Vagina (tissue), 2 donors: ENCODE measurements at regions of chr7 and their contacts with region 1.

Region 1: GRCh38 chr7:130781346-130781745 is 47.3 kb upstream of the KLF14 start:
- DNase-seq: no peak
- H3K4me3 ChIP-seq: no peak overlapping the region
- H3K27ac ChIP-seq: no peak overlapping the region
- H3K4me1 ChIP-seq: no peaks in the 10 kb centered on the region
- H3K27me3 ChIP-seq: no peaks in the 10 kb centered on the region
- CTCF ChIP-seq: no peak
- POLR2A ChIP-seq: no peak

Region 2: DNA sequence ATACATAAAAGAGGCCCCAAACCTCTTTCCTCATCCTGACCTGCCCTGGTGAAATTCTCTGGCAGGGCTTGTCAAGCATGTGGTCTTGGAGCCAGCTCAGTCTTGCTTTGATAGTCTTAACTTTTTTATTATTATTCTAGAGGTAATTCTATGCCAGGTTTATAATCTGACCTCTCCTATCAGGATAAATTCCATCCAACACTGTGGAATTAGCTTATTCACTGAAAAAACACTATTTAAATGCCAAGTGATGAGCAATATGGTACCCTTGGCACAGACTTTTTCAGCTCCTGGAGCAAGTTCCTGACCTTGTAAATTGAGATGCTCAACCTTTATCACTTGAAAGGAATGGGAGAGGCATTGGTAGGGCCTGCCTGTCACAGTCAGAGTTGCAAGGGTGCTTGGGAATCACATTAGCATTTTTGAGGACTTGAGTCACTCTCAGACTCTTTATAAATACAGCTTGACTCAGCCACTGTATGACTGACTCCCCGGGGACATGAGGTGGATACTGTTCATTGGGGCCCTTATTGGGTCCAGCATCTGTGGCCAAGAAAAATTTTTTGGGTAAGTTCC is 488.6 kb before region 1 on chr7 and contains the start of gene CPA4:
- intact Hi-C with region 1: no loop called
- DNase-seq: no peak
- H3K4me3 ChIP-seq: no peak within 1 kb of the TSS
- H3K27ac ChIP-seq: no peak within 1 kb of the TSS
- H3K4me1 ChIP-seq: peaks cover 8% of the 10 kb centered on the region
- H3K27me3 ChIP-seq: no peaks in the 10 kb centered on the region
- CTCF ChIP-seq: no peak
- POLR2A ChIP-seq: no peak
- total RNA-seq, gene CPA4: 8.8 TPM

Region 3: DNA sequence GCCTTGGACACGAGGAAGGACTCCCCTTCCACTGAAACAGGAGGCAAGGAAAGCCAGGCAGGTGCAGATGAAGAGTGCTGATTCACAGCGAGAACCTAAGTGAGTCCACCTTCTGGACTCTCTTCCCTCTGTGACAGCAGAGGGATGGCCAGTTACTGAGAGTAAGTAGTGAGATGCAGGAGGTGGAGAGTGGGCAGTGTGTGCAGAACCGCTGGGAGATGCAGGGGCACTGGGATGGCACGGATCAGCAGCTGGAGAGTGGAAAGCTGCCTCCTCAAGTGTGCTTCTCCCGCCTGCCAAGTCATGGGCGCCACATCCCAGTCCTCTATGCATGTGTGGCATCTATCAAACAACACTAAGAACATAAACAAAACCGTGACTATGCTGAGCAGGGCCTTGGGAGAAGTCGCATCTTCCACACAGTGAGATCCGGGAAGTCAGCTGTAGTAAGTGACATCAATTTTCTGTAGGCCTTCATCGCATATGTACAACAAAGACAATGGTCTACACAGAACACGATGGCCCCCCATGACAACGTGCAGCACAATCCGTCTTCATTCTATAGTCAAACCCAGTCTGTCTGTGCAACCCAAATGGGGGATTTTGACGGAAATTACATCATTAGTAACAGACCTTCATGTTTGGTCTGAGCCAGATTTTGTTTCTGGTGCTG is 170.1 kb after region 1 on chr7:
- intact Hi-C with region 1: loop called (anchors 5 kb)
- DNase-seq: no peak
- H3K4me3 ChIP-seq: no peak overlapping the region
- H3K27ac ChIP-seq: peak overlapping the region; percentile 38
- H3K4me1 ChIP-seq: peaks cover 58% of the 10 kb centered on the region
- H3K27me3 ChIP-seq: no peaks in the 10 kb centered on the region
- CTCF ChIP-seq: no peak
- POLR2A ChIP-seq: no peak

Region 4: DNA sequence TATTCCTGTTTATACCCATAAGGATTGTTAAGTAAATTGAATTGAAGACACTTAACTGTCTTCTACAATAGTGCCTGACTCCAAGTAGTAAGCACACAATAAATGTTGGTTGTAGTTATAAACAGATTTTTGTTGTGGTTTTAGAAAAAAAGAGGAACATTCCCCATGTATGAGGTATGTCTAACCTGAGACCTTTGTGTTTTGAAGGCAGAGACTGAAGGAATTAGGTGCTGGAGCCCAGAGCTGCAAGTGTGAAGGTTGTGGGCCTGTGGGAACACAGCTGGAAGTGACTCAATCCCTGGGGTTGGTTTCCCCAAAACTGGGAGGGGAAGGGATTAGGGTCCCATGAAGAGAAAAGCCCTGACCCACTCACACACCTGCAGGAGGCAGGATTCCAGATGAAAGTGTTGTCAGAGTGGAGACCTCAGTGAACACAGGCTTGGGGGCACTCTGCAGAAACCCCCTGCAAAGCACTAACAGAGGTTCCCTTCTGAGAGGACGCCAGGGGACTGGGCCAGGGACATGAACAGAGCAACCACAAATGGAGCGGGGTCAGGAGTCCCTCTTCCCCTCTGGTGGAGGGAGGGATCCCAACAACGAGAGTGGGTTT is 217.8 kb after region 1 on chr7:
- intact Hi-C with region 1: no loop called
- DNase-seq: peak in 1 of 2 donors; percentile 54
- H3K4me3 ChIP-seq: no peak overlapping the region
- H3K27ac ChIP-seq: peak overlapping the region; percentile 17
- H3K4me1 ChIP-seq: peaks cover 71% of the 10 kb centered on the region
- H3K27me3 ChIP-seq: no peaks in the 10 kb centered on the region
- CTCF ChIP-seq: no peak
- POLR2A ChIP-seq: no peak